ENCODE measurements at regions of chr10 and their contacts with region 1.

Region 1: GRCh38 chr10:11782793-11783557 is 40.2 kb upstream of the PROSER2 start:
- DNase-seq: no peak
- ATAC-seq: peak; percentile 40
- H3K4me3 Mint-ChIP-seq: no peak overlapping the region
- H3K27ac Mint-ChIP-seq: no peak overlapping the region
- H3K4me1 Mint-ChIP-seq: no peaks in the 10 kb centered on the region
- H3K27me3 Mint-ChIP-seq: peaks cover 5% of the 10 kb centered on the region
- CTCF ChIP-seq: no peak

Region 2: GRCh38 chr10:11798845-11799735 is 16.1 kb after region 1 on chr10:
- CTCF ChIA-PET with region 1: no interaction called
- POLR2A ChIA-PET with region 1: no interaction called
- intact Hi-C with region 1: no loop called
- DNase-seq: no peak
- ATAC-seq: no peak
- H3K4me3 Mint-ChIP-seq: no peak overlapping the region
- H3K27ac Mint-ChIP-seq: no peak overlapping the region
- H3K4me1 Mint-ChIP-seq: peaks cover 4% of the 10 kb centered on the region
- H3K27me3 Mint-ChIP-seq: peaks cover 3% of the 10 kb centered on the region
- CTCF ChIP-seq: no peak

Region 3: GRCh38 chr10:11819030-11819429 is 36.1 kb after region 1 on chr10:
- CTCF ChIA-PET with region 1: no interaction called
- POLR2A ChIA-PET with region 1: no interaction called
- intact Hi-C with region 1: loop called (anchors 2 kb)
- DNase-seq: no peak
- ATAC-seq: no peak
- H3K4me3 Mint-ChIP-seq: no peak overlapping the region
- H3K27ac Mint-ChIP-seq: no peak overlapping the region
- H3K4me1 Mint-ChIP-seq: peaks cover 7% of the 10 kb centered on the region
- H3K27me3 Mint-ChIP-seq: peaks cover 9% of the 10 kb centered on the region
- CTCF ChIP-seq: no peak

Region 4: GRCh38 chr10:11986593-11987216 is 203.7 kb after region 1 on chr10:
- CTCF ChIA-PET with region 1: interaction called, 20 read pairs
- POLR2A ChIA-PET with region 1: no interaction called
- intact Hi-C with region 1: loop called (anchors 1 kb)
- DNase-seq: peak; percentile 48
- ATAC-seq: peak; percentile 71
- H3K4me3 Mint-ChIP-seq: no peak overlapping the region
- H3K27ac Mint-ChIP-seq: no peak overlapping the region
- H3K4me1 Mint-ChIP-seq: peaks cover 19% of the 10 kb centered on the region
- H3K27me3 Mint-ChIP-seq: no peaks in the 10 kb centered on the region
- CTCF ChIP-seq: no peak

Region 5: DNA sequence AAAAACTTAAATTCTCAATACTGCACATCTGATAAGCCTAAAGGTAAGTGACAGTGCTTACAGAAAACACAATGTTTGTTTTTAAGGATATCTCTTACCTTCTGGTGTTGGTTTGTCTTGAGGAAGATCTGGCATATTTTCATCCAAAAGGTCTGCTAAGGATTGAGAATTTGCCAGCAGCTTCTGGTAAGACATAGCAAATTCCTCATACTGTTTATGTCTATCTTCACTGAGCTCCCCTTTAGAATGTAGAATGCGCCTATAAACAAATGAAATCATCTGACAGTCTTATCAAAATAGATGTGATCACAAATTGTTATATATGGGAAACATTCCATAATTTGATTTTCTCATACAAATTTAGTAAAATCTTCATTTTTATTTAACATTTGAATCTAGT is 231.0 kb after region 1 on chr10:
- CTCF ChIA-PET with region 1: no interaction called
- POLR2A ChIA-PET with region 1: no interaction called
- intact Hi-C with region 1: no loop called
- DNase-seq: no peak
- ATAC-seq: no peak
- H3K4me3 Mint-ChIP-seq: no peak overlapping the region
- H3K27ac Mint-ChIP-seq: no peak overlapping the region
- H3K4me1 Mint-ChIP-seq: peaks cover 8% of the 10 kb centered on the region
- H3K27me3 Mint-ChIP-seq: no peaks in the 10 kb centered on the region
- CTCF ChIP-seq: no peak

Region 6: GRCh38 chr10:12107781-12108180 is 324.8 kb after region 1 on chr10:
- CTCF ChIA-PET with region 1: no interaction called
- POLR2A ChIA-PET with region 1: no interaction called
- intact Hi-C with region 1: no loop called
- DNase-seq: no peak
- ATAC-seq: no peak
- H3K4me3 Mint-ChIP-seq: no peak overlapping the region
- H3K27ac Mint-ChIP-seq: no peak overlapping the region
- H3K4me1 Mint-ChIP-seq: peaks cover 14% of the 10 kb centered on the region
- H3K27me3 Mint-ChIP-seq: no peaks in the 10 kb centered on the region
- CTCF ChIP-seq: no peak

Region 7: DNA sequence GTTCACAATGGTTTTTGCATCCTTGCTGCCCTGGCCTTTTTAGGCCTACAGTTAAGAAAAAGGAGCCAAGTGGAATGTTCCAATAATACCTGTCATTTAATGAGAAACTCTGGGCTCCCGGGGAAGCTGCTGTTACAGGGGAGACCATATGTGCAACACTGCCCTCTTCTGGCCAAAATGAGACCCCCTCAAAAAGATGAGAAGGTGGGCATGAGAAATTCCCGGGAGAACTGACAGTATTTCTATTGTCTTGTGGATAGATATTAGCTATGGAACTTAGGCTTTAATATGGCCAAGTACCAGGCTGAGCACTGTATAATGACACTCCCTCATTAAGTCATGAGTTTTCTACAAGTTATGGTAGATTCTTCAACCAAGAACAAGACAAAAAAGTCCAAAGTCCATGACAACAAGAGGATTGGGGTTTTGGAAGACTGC is 1119.2 kb after region 1 on chr10:
- CTCF ChIA-PET with region 1: no interaction called
- POLR2A ChIA-PET with region 1: no interaction called
- intact Hi-C with region 1: loop called (anchors 5 kb)
- DNase-seq: peak; percentile 18
- ATAC-seq: no peak
- H3K4me3 Mint-ChIP-seq: no peak overlapping the region
- H3K27ac Mint-ChIP-seq: no peak overlapping the region
- H3K4me1 Mint-ChIP-seq: no peaks in the 10 kb centered on the region
- H3K27me3 Mint-ChIP-seq: peaks cover 23% of the 10 kb centered on the region
- CTCF ChIP-seq: peak; percentile 82

Measured in activated B cell treated with CpG ODN at 0.5 μM for 24 hours (primary cell).